Activated CD8-positive, alpha-beta memory T cell treated with anti-CD3 and anti-CD28 coated beads, Interleukin-2, amount 10 ng/mL, durations not matched to agents 7 days and 5 days (primary cell): ENCODE measurements at regions of chr9 and their contacts with region 1.

Region 1: GRCh38 chr9:6353851-6354686 is 25.9 kb downstream of the TPD52L3 start:
- DNase-seq: peak; percentile 42
- ATAC-seq: peak; percentile 96
- H3K4me3 Mint-ChIP-seq: no peak overlapping the region
- H3K27ac Mint-ChIP-seq: no peak overlapping the region
- H3K4me1 Mint-ChIP-seq: peaks cover 13% of the 10 kb centered on the region
- H3K27me3 Mint-ChIP-seq: peaks cover 25% of the 10 kb centered on the region

Region 2: GRCh38 chr9:6383551-6384225 is 29.6 kb after region 1 on chr9:
- CTCF ChIA-PET with region 1: no interaction called
- DNase-seq: no peak
- ATAC-seq: no peak
- H3K4me3 Mint-ChIP-seq: no peak overlapping the region
- H3K27ac Mint-ChIP-seq: no peak overlapping the region
- H3K4me1 Mint-ChIP-seq: no peaks in the 10 kb centered on the region
- H3K27me3 Mint-ChIP-seq: peaks cover 9% of the 10 kb centered on the region

Region 3: DNA sequence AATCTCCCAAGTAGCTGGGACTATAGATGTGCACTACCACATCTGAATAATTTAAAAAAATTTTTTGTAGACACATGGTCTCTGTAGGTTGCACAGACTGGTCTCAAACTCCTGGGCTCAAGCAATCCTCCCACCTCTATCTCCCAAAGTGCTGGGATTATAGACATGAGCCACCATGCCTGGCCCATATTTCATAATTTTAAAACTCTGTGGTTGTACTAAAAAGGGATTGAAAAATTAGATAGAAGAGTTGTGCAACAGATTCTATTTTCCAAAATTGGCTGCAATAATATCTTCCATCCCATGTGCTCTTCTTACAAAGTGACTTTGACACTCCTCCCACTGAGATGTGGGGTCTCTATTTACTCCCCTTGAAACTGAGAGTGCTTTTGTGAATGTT is 51.3 kb after region 1 on chr9:
- CTCF ChIA-PET with region 1: no interaction called
- DNase-seq: no peak
- ATAC-seq: no peak
- H3K4me3 Mint-ChIP-seq: no peak overlapping the region
- H3K27ac Mint-ChIP-seq: no peak overlapping the region
- H3K4me1 Mint-ChIP-seq: no peaks in the 10 kb centered on the region
- H3K27me3 Mint-ChIP-seq: peaks cover 10% of the 10 kb centered on the region

Region 4: DNA sequence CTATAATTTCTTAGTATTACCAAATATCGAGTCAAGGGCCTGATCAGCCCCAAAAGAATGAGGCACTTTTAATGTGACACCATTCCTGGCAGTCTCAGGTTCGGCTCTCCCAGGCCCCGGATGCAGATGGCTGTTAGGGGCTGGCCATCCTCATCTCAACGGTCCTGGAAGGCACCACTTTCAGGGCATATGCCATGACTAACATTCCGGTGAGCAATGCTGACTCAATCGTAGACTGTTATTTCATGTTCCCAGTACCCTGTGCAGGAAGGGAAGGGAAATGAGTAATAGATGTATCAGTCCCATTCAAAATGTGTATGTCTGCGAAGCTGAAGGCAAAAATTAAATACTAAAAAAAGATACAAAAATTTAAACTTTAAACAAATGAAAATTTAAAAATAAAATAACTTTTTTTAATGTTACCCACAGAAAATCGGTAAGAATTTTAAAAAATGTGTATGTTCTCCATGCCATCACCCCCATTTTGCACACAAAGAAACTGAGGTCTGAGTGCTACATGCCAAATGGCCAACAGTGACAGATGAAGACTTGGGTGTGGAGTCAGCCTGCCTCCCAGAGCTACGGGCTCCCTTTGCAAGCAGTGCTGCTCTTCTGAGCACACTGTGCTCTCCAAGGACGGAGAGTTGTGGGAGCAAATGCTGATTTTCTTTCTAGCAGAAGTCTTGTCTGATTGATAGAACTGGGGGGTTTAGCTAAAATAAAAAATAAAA is 212.5 kb after region 1 on chr9:
- CTCF ChIA-PET with region 1: interaction called, 40 read pairs
- DNase-seq: peak; percentile 61
- ATAC-seq: peak; percentile 83
- H3K4me3 Mint-ChIP-seq: no peak overlapping the region
- H3K27ac Mint-ChIP-seq: peak overlapping the region; percentile 78
- H3K4me1 Mint-ChIP-seq: peaks cover 13% of the 10 kb centered on the region
- H3K27me3 Mint-ChIP-seq: peaks cover 7% of the 10 kb centered on the region